Naive thymus-derived CD4-positive, alpha-beta T cell (primary cell): ENCODE measurements at regions of chr5 and their contacts with region 1.

Region 1: DNA sequence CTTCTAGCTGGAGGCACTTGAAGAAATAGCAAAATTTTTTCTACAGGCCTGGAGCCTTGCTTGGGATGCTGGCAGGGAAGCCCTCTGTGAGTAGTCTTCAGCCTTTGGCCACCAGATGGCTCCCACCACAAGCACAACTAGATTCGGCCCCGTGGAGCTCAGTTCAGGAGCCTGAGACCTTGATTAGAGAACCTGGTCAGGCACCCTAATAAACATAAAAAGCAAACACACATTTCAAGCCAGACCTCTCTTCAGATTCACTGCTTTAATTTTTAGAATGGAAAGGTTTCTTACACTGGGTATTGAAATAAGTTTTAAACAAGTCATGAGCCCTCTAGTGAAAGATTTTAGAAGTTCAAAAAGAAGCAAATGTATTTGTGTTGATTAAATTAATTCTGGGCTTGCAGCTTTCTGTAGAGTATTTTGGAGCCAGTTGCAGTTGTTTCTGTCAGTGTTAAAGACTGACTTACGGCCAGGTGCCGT is 41.4 kb downstream of the GLRX start:
- DNase-seq: peak; percentile 38 to 77 (median 71)
- ATAC-seq: peak; percentile 93
- H3K4me3 ChIP-seq: peak overlapping the region; percentile 45
- H3K4me3 Mint-ChIP-seq: peak overlapping the region in 9 of 10 donors; percentile 52 to 85 (median 84)
- H3K27ac ChIP-seq: peak overlapping the region; percentile 39
- H3K27ac Mint-ChIP-seq: peak overlapping the region in 8 of 9 donors; percentile 48 to 84 (median 62)
- H3K4me1 ChIP-seq: no peaks in the 10 kb centered on the region
- H3K4me1 Mint-ChIP-seq: peaks cover 0 to 21% (median 19%) of the 10 kb centered on the region in 7 donors
- H3K27me3 ChIP-seq: no peaks in the 10 kb centered on the region
- H3K27me3 Mint-ChIP-seq: peaks cover 0 to 8% (median 0%) of the 10 kb centered on the region in 5 donors

Region 2: DNA sequence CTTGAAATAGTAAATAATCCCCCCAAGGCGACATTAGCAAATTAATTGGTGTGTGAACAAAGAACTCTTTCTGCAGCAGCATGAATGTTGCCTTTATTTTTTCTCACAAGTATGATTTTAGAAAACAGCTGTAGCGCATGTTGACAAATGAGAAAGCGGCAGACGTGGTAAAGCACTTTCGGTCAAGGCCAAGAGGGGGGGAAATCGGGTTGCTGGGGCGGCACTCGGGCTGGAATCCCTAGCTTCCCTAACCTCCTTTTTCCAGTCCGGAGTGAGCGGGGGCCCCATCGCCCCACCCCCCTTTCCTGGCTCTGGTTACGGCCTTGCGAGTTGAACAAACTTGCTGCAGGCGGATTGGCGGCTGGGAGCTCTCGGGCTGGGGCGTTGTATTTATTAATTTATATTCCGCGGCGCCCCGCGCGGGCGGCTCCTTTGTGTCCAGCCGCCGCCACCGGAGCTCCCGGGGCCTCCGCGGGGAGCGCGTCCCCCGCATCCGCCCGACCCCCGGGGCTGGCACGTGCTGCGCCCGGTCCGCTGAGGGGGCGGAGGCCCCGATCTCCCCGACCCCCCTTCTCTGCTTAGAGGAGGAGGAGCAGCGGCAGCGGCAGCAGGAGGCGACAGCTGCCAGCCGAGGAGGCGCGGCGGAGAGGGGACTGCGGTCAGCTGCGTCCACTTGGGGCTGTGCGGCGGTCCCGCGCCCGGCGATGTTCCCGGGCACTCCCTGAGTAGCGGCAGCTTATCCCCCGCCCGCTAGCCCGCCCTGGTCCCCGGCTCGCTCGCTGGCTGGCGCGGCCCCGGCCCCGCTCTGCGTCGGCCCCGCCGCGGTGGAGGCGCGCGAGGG is 50.2 kb before region 1 on chr5 and contains the start of gene RHOBTB3:
- CTCF ChIA-PET with region 1: interaction called, 3 read pairs
- POLR2A ChIA-PET with region 1: no interaction called
- intact Hi-C with region 1: loop called in 1 of 2 experiments (anchors 2 kb)
- DNase-seq: peak; percentile 20 to 58 (median 41)
- ATAC-seq: peak; percentile 77
- H3K4me3 ChIP-seq: peak within 1 kb of the TSS; percentile 64
- H3K4me3 Mint-ChIP-seq: peak within 1 kb of the TSS; percentile 83 to 94 (median 88)
- H3K27ac ChIP-seq: peak within 1 kb of the TSS; percentile 9
- H3K27ac Mint-ChIP-seq: peak within 1 kb of the TSS in 8 of 9 donors; percentile 30 to 88 (median 62)
- H3K4me1 ChIP-seq: peaks cover 0 to 20% of the 10 kb centered on the region in 2 donors
- H3K4me1 Mint-ChIP-seq: peaks cover 32 to 88% (median 63%) of the 10 kb centered on the region in 7 donors
- H3K27me3 ChIP-seq: peaks cover 4 to 6% of the 10 kb centered on the region in 2 donors
- H3K27me3 Mint-ChIP-seq: peaks cover 6 to 79% (median 13%) of the 10 kb centered on the region in 5 donors
- total RNA-seq, gene RHOBTB3: 0.24 to 9.6 (median 1.6) TPM

Region 3: DNA sequence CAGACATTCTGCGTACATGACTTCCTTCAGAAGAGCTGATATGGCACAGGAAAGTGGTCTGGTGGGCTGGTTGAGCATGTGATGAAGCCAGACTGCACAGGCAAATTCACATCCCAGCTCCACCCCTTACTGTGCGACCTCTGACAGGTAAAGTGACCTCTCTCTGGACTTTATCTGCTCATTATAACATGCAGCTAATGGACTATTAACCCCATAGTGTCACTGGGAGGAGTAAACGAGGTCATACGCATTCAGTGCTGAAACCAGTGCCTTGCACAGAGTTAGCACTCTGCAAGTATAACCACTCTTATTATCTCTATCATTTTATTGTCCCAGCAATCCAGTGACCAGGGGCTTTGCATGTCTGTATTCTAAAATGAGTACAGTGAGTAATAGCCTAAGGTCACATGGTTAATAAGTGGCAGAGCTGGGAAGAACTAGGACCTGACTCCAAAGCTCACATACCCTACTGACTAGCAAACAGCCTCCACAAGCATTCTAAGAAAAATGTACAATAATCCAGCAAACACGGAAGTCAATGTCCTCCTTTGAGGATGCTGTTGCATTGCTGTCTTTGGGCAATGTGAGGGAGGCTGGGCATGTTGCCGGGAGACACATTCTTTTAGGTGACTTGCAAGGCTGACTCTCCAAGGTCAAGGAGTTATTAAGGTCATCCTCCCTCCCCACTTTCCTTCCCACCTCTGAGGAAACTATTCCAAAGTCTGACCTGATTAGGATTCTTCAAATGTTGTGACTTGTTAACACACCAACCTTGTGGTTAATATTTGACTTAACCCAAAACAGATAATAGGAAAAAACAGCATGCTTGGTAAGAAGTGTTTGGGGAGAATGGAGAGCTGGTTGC is 22.4 kb after region 1 on chr5:
- CTCF ChIA-PET with region 1: interaction called, 33 read pairs
- POLR2A ChIA-PET with region 1: interaction called, 3 read pairs
- intact Hi-C with region 1: loop called (anchors 1 kb)
- DNase-seq: no peak
- ATAC-seq: no peak
- H3K4me3 ChIP-seq: no peak overlapping the region
- H3K4me3 Mint-ChIP-seq: no peak overlapping the region
- H3K27ac ChIP-seq: no peak overlapping the region
- H3K27ac Mint-ChIP-seq: no peak overlapping the region
- H3K4me1 ChIP-seq: peaks cover 11 to 12% of the 10 kb centered on the region in 2 donors
- H3K4me1 Mint-ChIP-seq: peaks cover 11 to 27% (median 15%) of the 10 kb centered on the region in 7 donors
- H3K27me3 ChIP-seq: no peaks in the 10 kb centered on the region
- H3K27me3 Mint-ChIP-seq: no peaks in the 10 kb centered on the region

Region 4: GRCh38 chr5:95835682-95836385 is 54.7 kb after region 1 on chr5:
- CTCF ChIA-PET with region 1: interaction called, 357 read pairs
- POLR2A ChIA-PET with region 1: interaction called, 13 read pairs
- intact Hi-C with region 1: loop called in 1 of 2 experiments (anchors 2 kb)
- DNase-seq: peak in 4 of 9 donors; percentile 27 to 38 (median 36)
- ATAC-seq: no peak
- H3K4me3 ChIP-seq: peak overlapping the region; percentile 60
- H3K4me3 Mint-ChIP-seq: peak overlapping the region; percentile 85 to 96 (median 92)
- H3K27ac ChIP-seq: peak overlapping the region; percentile 74
- H3K27ac Mint-ChIP-seq: peak overlapping the region; percentile 75 to 98 (median 92)
- H3K4me1 ChIP-seq: peaks cover 15 to 21% of the 10 kb centered on the region in 2 donors
- H3K4me1 Mint-ChIP-seq: peaks cover 36 to 63% (median 61%) of the 10 kb centered on the region in 7 donors
- H3K27me3 ChIP-seq: no peaks in the 10 kb centered on the region
- H3K27me3 Mint-ChIP-seq: no peaks in the 10 kb centered on the region

Region 5: DNA sequence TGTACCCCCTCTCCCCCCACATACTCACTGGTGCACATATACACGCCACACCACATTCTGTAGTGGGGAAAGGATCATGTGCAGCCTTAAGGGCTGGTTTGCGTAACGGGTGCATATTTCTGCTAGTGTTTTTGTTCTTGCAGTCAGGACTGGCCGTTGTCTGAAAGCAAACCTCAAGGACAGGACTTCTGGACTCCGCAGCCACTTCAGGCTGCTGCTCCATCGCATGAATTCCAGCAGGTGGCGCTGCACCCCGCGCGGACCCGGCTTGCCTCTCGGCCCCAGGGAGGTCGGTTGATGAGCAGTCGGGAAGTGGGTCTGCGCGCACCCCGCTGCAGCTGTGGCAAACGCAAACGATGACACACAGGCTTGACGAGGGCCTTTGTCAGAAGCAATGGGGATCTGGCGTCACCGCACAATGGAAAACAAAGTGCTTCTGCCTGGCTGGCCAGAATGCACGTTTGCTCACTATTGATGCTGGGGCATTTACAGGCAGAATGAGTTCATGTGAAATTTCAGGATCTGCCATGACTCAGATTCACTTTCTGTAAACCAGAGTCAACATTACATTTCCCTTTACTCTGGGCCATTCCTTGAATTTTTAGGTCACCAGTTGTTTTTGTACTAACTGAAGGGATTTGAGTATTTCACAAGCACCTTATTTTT is 77.7 kb after region 1 on chr5:
- CTCF ChIA-PET with region 1: interaction called, 18 read pairs
- POLR2A ChIA-PET with region 1: interaction called, 3 read pairs
- intact Hi-C with region 1: no loop called
- DNase-seq: peak; percentile 81 to 91 (median 87)
- ATAC-seq: peak; percentile 94
- H3K4me3 ChIP-seq: no peak overlapping the region
- H3K4me3 Mint-ChIP-seq: peak overlapping the region; percentile 25 to 78 (median 62)
- H3K27ac ChIP-seq: no peak overlapping the region
- H3K27ac Mint-ChIP-seq: peak overlapping the region; percentile 10 to 85 (median 56)
- H3K4me1 ChIP-seq: no peaks in the 10 kb centered on the region
- H3K4me1 Mint-ChIP-seq: peaks cover 11 to 43% (median 16%) of the 10 kb centered on the region in 7 donors
- H3K27me3 ChIP-seq: no peaks in the 10 kb centered on the region
- H3K27me3 Mint-ChIP-seq: peaks cover 0 to 18% (median 14%) of the 10 kb centered on the region in 5 donors